GM12878 (cell line): ENCODE measurements at regions of chr2 and their contacts with region 1.

Region 1: GRCh38 chr2:44244129-44244871 is 31.0 kb upstream of the SLC3A1 start:
- DNase-seq: no peak
- ATAC-seq: peak; percentile 85
- H3K4me3 ChIP-seq: no peak overlapping the region
- H3K27ac ChIP-seq: no peak overlapping the region
- H3K4me1 ChIP-seq: no peaks in the 10 kb centered on the region
- H3K27me3 ChIP-seq: no peaks in the 10 kb centered on the region
- CTCF ChIP-seq: peak; percentile 33 to 45 (median 41); a peak in 4 of 6 replicates
- EP300 ChIP-seq: no peak
- POLR2A ChIP-seq: no peak
- RAD21 ChIP-seq: peak; percentile 77

Region 2: DNA sequence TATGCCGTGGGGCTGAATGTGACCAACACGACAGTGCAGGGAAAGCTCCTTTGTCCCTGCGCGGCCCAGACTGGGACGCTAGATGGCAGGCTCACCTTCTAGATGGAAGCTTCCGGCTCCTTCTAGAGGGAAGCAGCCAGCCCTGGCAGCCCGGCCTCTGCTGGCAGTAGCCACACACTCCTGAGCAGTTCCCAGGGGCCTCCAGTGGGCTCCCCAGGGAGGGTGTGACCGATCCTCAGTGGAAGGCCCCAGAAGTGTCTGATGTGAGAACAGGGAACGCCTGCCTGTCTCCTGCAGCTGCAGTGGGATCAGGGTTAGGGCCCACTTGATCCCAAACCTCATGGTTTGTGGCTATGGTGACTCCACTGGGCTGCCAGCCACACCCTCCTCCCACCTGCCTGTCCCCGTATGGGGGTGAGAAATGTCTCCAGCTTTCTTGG is 200.0 kb before region 1 on chr2:
- CTCF ChIA-PET with region 1: interaction called, 5 read pairs
- POLR2A ChIA-PET with region 1: no interaction called
- RAD21 ChIA-PET with region 1: interaction called, 9 read pairs
- SMC1A ChIA-PET with region 1: interaction called, 4 read pairs
- in situ Hi-C with region 1: no loop called
- intact Hi-C with region 1: loop called (anchors 1 kb)
- DNase-seq: peak; percentile 44
- ATAC-seq: peak; percentile 100
- H3K4me3 ChIP-seq: no peak overlapping the region
- H3K27ac ChIP-seq: no peak overlapping the region
- H3K4me1 ChIP-seq: peaks cover 5% of the 10 kb centered on the region
- H3K27me3 ChIP-seq: no peaks in the 10 kb centered on the region
- CTCF ChIP-seq: peak; percentile 94 to 98 (median 94); a peak in 5 of 6 replicates
- EP300 ChIP-seq: no peak; a peak in 1 of 4 replicates
- POLR2A ChIP-seq: no peak
- RAD21 ChIP-seq: peak; percentile 92

Region 3: DNA sequence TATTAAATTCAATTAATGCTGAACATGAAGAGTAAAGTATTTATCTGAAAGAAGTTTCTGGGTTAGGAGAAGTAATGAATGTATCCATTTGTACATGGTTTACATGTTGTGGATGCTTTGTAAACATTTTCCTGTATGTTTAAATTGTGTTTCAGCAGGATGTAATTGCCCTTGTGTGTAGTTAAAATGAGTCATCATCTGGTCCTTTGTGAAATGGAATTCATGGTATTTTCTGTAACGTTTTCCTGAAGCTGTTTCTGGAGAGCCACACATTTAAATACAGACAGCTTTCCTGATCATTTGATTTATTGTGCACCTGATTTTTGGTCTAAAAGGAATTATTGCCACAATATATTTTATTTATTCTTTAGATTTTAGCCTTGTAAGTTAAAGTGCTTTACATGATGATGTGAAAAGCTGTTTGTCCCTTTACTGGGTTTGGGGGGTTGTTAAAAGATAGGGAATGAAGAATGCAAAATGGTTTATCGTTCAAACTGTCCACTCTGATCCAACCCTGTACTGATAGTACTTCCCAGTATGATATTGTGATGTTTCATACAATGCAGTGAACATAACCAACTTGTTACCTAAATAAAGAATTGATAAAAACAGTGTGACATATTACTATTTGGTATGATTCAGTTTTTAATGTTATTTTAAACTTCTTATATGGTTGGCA is 10.7 kb before region 1 on chr2:
- CTCF ChIA-PET with region 1: interaction called, 16 read pairs
- POLR2A ChIA-PET with region 1: no interaction called
- RAD21 ChIA-PET with region 1: interaction called, 3 read pairs
- SMC1A ChIA-PET with region 1: interaction called, 27 read pairs
- in situ Hi-C with region 1: no loop called
- intact Hi-C with region 1: no loop called
- DNase-seq: no peak
- ATAC-seq: no peak
- H3K4me3 ChIP-seq: no peak overlapping the region
- H3K27ac ChIP-seq: no peak overlapping the region
- H3K4me1 ChIP-seq: peaks cover 14% of the 10 kb centered on the region
- H3K27me3 ChIP-seq: no peaks in the 10 kb centered on the region
- CTCF ChIP-seq: no peak
- EP300 ChIP-seq: no peak
- POLR2A ChIP-seq: no peak
- RAD21 ChIP-seq: no peak

Region 4: GRCh38 chr2:44291281-44292248 is 47.3 kb after region 1 on chr2:
- CTCF ChIA-PET with region 1: interaction called, 8 read pairs
- POLR2A ChIA-PET with region 1: no interaction called
- RAD21 ChIA-PET with region 1: interaction called, 3 read pairs
- SMC1A ChIA-PET with region 1: interaction called, 13 read pairs
- in situ Hi-C with region 1: no loop called
- intact Hi-C with region 1: loop called (anchors 1 kb)
- DNase-seq: no peak
- ATAC-seq: peak; percentile 71
- H3K4me3 ChIP-seq: no peak overlapping the region
- H3K27ac ChIP-seq: no peak overlapping the region
- H3K4me1 ChIP-seq: no peaks in the 10 kb centered on the region
- H3K27me3 ChIP-seq: no peaks in the 10 kb centered on the region; a peak in 1 of 4 replicates
- CTCF ChIP-seq: peak; percentile 8 to 51 (median 37); a peak in 3 of 6 replicates
- EP300 ChIP-seq: no peak
- POLR2A ChIP-seq: no peak
- RAD21 ChIP-seq: peak; percentile 45

Region 5: GRCh38 chr2:44342854-44343253 is 98.6 kb after region 1 on chr2:
- CTCF ChIA-PET with region 1: interaction called, 13 read pairs
- POLR2A ChIA-PET with region 1: no interaction called
- RAD21 ChIA-PET with region 1: interaction called, 3 read pairs
- SMC1A ChIA-PET with region 1: interaction called, 4 read pairs
- in situ Hi-C with region 1: no loop called
- intact Hi-C with region 1: loop called (anchors 5 kb)
- DNase-seq: no peak
- ATAC-seq: peak; percentile 66; the same call in 2 of the 3 replicates
- H3K4me3 ChIP-seq: no peak overlapping the region
- H3K27ac ChIP-seq: no peak overlapping the region
- H3K4me1 ChIP-seq: no peaks in the 10 kb centered on the region
- H3K27me3 ChIP-seq: no peaks in the 10 kb centered on the region
- CTCF ChIP-seq: peak; percentile 20 to 54 (median 39); a peak in 5 of 6 replicates
- EP300 ChIP-seq: no peak
- POLR2A ChIP-seq: no peak
- RAD21 ChIP-seq: peak; percentile 64

Region 6: GRCh38 chr2:44524347-44524926 is 280.1 kb after region 1 on chr2:
- CTCF ChIA-PET with region 1: no interaction called
- POLR2A ChIA-PET with region 1: no interaction called
- RAD21 ChIA-PET with region 1: no interaction called
- SMC1A ChIA-PET with region 1: no interaction called
- in situ Hi-C with region 1: no loop called
- intact Hi-C with region 1: no loop called
- DNase-seq: no peak
- ATAC-seq: no peak
- H3K4me3 ChIP-seq: no peak overlapping the region
- H3K27ac ChIP-seq: no peak overlapping the region
- H3K4me1 ChIP-seq: no peaks in the 10 kb centered on the region
- H3K27me3 ChIP-seq: no peaks in the 10 kb centered on the region
- CTCF ChIP-seq: no peak
- EP300 ChIP-seq: no peak
- POLR2A ChIP-seq: no peak
- RAD21 ChIP-seq: no peak